Activated CD4-positive, alpha-beta T cell treated with anti-CD3 and anti-CD28 coated beads, Interleukin-2, amount 10 ng/mL, durations not matched to agents 7 days and 5 days (primary cell): ENCODE measurements at regions of chr10 and their contacts with region 1.

Region 1: GRCh38 chr10:110843031-110843430 is 28.7 kb upstream of the PDCD4 start:
- DNase-seq: peak; percentile 64
- H3K4me3 Mint-ChIP-seq: no peak overlapping the region
- H3K27ac Mint-ChIP-seq: peak overlapping the region; percentile 79
- H3K4me1 Mint-ChIP-seq: peaks cover 35% of the 10 kb centered on the region
- H3K27me3 Mint-ChIP-seq: no peaks in the 10 kb centered on the region

Region 2: GRCh38 chr10:110857265-110858158 is 14.5 kb after region 1 on chr10:
- CTCF ChIA-PET with region 1: interaction called, 14 read pairs
- POLR2A ChIA-PET with region 1: interaction called, 3 read pairs
- DNase-seq: no peak
- H3K4me3 Mint-ChIP-seq: peak overlapping the region; percentile 4
- H3K27ac Mint-ChIP-seq: peak overlapping the region; percentile 95
- H3K4me1 Mint-ChIP-seq: peaks cover 85% of the 10 kb centered on the region
- H3K27me3 Mint-ChIP-seq: no peaks in the 10 kb centered on the region